SK-N-SH (cell line): ENCODE measurements at regions of chr19 and their contacts with region 1.

Region 1: GRCh38 chr19:1605236-1606137 is at the start of gene UQCR11:
- DNase-seq: peak; percentile 100
- H3K4me3 ChIP-seq: peak within 1 kb of the TSS; percentile 73 to 99
- H3K27ac ChIP-seq: peak within 1 kb of the TSS; percentile 76 to 94
- H3K4me1 ChIP-seq: peaks cover 5 to 9% of the 10 kb centered on the region in 2 experiments; a peak in 2 of 4 replicates
- H3K27me3 ChIP-seq: no peaks in the 10 kb centered on the region
- CTCF ChIP-seq: peak; percentile 63
- EP300 ChIP-seq: no peak
- RAD21 ChIP-seq: peak; percentile 73
- polyA plus RNA-seq, gene UQCR11: 247 and 372 TPM in 2 replicates

Region 2: DNA sequence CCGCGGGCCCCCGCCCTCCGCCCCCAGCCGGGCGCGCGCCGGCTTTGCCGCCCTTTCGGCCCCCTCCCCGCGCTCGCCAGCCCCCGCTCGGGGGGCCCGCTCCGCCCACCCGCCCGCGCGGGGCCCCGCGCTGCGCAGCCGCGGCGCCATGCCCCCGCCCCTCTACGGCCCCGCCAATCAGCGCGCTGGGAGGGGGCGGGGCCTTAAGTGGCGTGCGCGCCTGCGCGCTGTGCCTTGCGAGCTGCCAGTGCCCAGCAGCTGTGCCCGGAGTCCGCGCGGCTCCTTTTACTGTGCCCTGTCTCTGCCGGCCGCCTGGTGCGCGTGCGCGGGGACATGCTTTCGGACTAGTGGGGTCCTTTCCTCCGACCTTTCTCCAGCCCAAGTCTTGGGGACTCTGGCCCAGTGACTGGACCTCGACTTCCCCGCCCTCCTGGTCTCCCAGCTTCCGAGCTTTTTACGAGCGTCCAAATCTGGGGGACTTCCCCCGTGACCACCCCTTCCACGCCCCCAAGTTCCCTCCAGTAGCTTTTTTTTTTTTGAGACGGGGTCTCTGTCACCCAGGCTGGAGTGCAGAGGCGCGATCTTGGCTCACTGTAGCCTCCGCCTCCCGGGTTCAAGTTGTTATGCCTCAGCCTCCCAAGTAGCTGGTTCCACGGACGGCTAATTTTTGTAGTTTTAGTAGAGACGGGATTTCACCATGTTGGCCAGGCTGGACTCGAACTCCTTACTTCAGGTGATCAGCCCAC is 12.6 kb before region 1 on chr19 and contains the start of gene MBD3:
- CTCF ChIA-PET with region 1: interaction called, 3 read pairs
- POLR2A ChIA-PET with region 1: interaction called, 15 read pairs
- DNase-seq: peak; percentile 100
- H3K4me3 ChIP-seq: peak within 1 kb of the TSS; percentile 69 to 88
- H3K27ac ChIP-seq: peak within 1 kb of the TSS; percentile 82 to 93
- H3K4me1 ChIP-seq: peaks cover 9% of the 10 kb centered on the region in 2 experiments; a peak in 1 of 4 replicates
- H3K27me3 ChIP-seq: no peaks in the 10 kb centered on the region
- CTCF ChIP-seq: no peak
- EP300 ChIP-seq: peak in 1 of 2 experiments; percentile 45; a peak in 1 of 4 replicates
- RAD21 ChIP-seq: no peak
- polyA plus RNA-seq, gene MBD3: 74.1 and 96.5 TPM in 2 replicates

Region 3: DNA sequence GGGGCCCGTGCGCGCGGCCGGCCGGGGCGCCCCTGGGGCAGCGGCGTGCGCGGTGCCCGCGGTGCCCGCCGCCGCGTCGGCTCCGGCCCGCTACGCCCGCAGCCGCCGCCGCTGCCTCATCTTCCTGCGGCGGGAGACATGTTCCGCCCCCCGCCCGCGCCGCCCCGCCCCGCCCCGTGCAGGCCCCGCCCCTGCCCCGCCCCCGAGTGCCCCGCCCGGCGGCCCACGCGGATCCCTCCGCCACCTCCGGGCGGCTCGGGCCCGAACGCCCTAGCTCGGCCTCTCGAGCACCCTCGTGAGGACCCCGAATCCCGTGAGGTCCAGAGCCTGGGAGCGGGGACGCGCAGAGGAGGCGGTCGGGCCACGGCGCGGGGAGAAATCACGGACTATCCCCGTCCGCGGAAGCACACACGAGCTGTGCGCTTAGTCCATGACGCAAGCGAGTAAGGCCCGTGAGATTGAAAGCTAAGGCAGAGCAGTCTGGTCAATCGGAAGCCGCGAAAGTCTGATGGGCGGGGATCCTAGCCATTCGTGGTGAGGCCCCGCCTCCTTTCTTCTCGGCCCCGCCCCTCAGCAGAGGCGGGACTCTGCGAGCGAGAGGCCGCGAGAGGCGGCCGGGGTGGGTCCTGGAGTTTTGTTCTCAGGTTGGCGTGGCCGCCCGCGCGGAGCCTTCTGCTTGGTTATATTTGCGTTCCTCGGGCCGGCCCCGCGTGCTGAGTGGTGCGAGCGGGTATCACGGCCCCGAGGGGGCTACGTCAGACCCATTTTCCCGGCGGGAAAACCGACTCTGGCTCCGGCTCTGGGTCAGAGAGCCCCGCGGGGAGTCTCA is 47.2 kb after region 1 on chr19 and contains the start of gene TCF3:
- CTCF ChIA-PET with region 1: interaction called, 12 read pairs
- POLR2A ChIA-PET with region 1: interaction called, 3 read pairs
- DNase-seq: peak; percentile 98
- H3K4me3 ChIP-seq: peak within 1 kb of the TSS; percentile 83 to 91
- H3K27ac ChIP-seq: peak within 1 kb of the TSS; percentile 94 to 99
- H3K4me1 ChIP-seq: peaks cover 0 to 9% of the 10 kb centered on the region in 2 experiments; a peak in 2 of 4 replicates
- H3K27me3 ChIP-seq: no peaks in the 10 kb centered on the region
- CTCF ChIP-seq: no peak
- EP300 ChIP-seq: no peak
- RAD21 ChIP-seq: no peak
- polyA plus RNA-seq, gene TCF3: 81.3 and 104 TPM in 2 replicates